BJ (cell line): ENCODE measurements at regions of chr15 and their contacts with region 1.

Region 1: GRCh38 chr15:84671211-84671610 is 13.2 kb upstream of the NMB start:
- DNase-seq: peak; percentile 56
- H3K4me3 ChIP-seq: no peak overlapping the region
- H3K27me3 ChIP-seq: no peaks in the 10 kb centered on the region
- CTCF ChIP-seq: no peak

Region 2: DNA sequence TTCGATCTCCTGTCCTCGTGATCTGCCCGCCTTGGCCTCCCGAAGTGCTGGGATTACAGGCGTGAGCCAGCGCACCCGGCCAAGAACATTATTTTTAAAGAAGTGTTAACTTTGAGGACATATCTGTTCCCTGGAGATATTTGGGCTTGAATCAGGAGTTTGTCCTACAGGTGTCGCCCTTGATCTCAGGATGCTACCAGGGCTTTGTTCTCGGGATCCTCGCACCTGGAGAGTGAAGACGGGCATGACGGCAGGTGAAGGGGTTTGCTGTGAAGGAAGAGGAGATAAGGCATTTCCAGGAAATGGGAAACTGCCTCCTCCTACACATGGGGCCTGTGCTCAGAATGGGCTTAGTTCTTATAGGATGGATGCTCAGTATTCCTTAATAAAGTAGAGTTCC is 47.9 kb before region 1 on chr15:
- CTCF ChIA-PET with region 1: no interaction called
- POLR2A ChIA-PET with region 1: no interaction called
- DNase-seq: no peak
- H3K4me3 ChIP-seq: no peak overlapping the region
- H3K27me3 ChIP-seq: no peaks in the 10 kb centered on the region
- CTCF ChIP-seq: no peak

Region 3: DNA sequence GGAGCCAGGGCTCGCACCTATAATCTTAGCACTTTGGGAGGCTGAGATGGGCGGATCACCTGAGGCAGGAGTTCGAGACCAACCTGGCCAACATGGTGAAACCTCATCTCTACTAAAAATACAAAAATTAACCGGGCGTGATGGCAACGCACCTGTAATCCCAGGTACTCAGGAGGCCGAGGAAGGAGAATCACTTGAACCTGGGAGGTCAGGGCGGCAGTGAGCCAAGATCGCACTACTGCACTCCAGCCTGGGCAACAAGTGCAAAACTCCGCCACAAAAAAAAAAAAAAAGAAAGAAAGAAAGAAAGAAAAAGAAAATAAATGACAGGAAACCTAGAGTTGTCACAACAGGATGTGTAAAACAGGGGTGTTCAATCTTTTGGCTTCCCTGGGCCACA is 10.2 kb before region 1 on chr15:
- CTCF ChIA-PET with region 1: interaction called, 3 read pairs
- POLR2A ChIA-PET with region 1: interaction called, 17 read pairs
- DNase-seq: no peak
- H3K4me3 ChIP-seq: no peak overlapping the region
- H3K27me3 ChIP-seq: no peaks in the 10 kb centered on the region
- CTCF ChIP-seq: no peak

Region 4: DNA sequence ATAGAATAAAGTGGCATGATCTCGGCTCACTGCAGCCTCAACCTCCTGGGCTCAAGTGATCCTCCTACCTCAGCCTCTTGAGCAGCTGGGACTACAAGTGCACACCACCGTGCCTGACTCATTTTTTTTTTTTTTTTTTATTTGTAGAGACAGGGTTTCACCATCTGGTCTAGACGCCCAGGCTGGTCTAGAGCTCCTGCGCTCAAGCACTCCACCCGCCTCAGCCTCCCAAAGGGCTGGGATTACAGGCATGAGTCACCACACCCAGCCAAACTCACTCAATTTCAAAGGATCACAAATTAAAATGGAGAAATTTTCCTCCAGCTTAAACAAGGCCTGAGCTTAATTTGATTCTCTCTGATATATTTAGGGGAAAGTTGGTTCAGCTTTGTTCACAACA is 14.1 kb after region 1 on chr15:
- CTCF ChIA-PET with region 1: no interaction called
- POLR2A ChIA-PET with region 1: no interaction called
- DNase-seq: peak; percentile 61
- H3K4me3 ChIP-seq: no peak overlapping the region
- H3K27me3 ChIP-seq: no peaks in the 10 kb centered on the region
- CTCF ChIP-seq: no peak

Region 5: GRCh38 chr15:84716036-84716799 is 45.0 kb after region 1 on chr15 and contains the start of gene SEC11A:
- CTCF ChIA-PET with region 1: no interaction called
- POLR2A ChIA-PET with region 1: no interaction called
- DNase-seq: peak; percentile 77
- H3K4me3 ChIP-seq: peak within 1 kb of the TSS; percentile 69
- H3K27me3 ChIP-seq: no peaks in the 10 kb centered on the region
- CTCF ChIP-seq: no peak
- polyA plus RNA-seq, gene SEC11A: 90.7 and 244 TPM in 2 replicates